Calu3 (cell line): ENCODE measurements at regions of chr1 and their contacts with region 1.

Region 1: DNA sequence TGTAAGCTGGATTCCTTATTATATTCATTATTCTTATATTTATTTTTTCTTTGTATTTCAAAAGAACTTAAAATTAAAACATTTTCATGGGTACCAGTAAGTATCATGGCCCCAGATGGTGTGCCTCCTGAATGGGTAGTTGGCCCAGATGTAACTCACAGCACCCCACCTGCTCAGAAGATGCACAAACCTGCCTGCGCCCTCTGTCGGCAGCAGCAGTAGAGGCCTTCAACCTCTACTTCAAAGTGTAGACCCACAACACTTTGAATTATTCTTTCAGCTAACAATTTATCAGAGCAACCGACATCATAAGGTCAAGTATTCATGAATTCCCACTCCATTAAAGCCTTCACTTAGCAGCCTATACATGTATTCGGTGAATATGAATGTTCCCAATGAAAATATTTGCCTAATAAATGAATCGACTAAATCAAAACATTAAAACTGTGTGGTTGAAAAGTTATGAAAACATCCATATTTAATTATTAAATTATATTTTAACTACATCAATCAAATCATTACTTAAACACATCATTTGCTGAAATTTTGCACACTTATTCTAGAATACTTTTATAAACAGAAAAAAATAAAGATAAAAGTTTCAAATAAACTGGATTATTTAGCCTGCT is 25.4 kb downstream of the PIGM start:
- DNase-seq: peak; percentile 85
- H3K4me3 Mint-ChIP-seq: no peak overlapping the region
- H3K27ac Mint-ChIP-seq: no peak overlapping the region
- H3K4me1 Mint-ChIP-seq: no peaks in the 10 kb centered on the region
- H3K27me3 Mint-ChIP-seq: peaks cover 42% of the 10 kb centered on the region
- CTCF ChIP-seq: peak; percentile 93

Region 2: GRCh38 chr1:159161001-159161718 is 845.3 kb before region 1 on chr1:
- CTCF ChIA-PET with region 1: no interaction called
- intact Hi-C with region 1: loop called (anchors 2 kb)
- DNase-seq: peak; percentile 86
- H3K4me3 Mint-ChIP-seq: no peak overlapping the region
- H3K27ac Mint-ChIP-seq: no peak overlapping the region
- H3K4me1 Mint-ChIP-seq: no peaks in the 10 kb centered on the region
- H3K27me3 Mint-ChIP-seq: peaks cover 53% of the 10 kb centered on the region
- CTCF ChIP-seq: peak; percentile 98

Region 3: GRCh38 chr1:159798893-159799292 is 207.5 kb before region 1 on chr1:
- CTCF ChIA-PET with region 1: interaction called, 31 read pairs
- intact Hi-C with region 1: loop called (anchors 1 kb)
- DNase-seq: peak; percentile 71
- H3K4me3 Mint-ChIP-seq: no peak overlapping the region
- H3K27ac Mint-ChIP-seq: no peak overlapping the region
- H3K4me1 Mint-ChIP-seq: no peaks in the 10 kb centered on the region
- H3K27me3 Mint-ChIP-seq: peaks cover 40% of the 10 kb centered on the region
- CTCF ChIP-seq: peak; percentile 64

Region 4: GRCh38 chr1:159936273-159936904 is 70.0 kb before region 1 on chr1:
- CTCF ChIA-PET with region 1: interaction called, 55 read pairs
- intact Hi-C with region 1: loop called (anchors 1 kb)
- DNase-seq: peak; percentile 93
- H3K4me3 Mint-ChIP-seq: no peak overlapping the region
- H3K27ac Mint-ChIP-seq: no peak overlapping the region
- H3K4me1 Mint-ChIP-seq: peaks cover 39% of the 10 kb centered on the region
- H3K27me3 Mint-ChIP-seq: no peaks in the 10 kb centered on the region
- CTCF ChIP-seq: peak; percentile 100

Region 5: GRCh38 chr1:159952932-159953331 is 53.5 kb before region 1 on chr1:
- CTCF ChIA-PET with region 1: no interaction called
- intact Hi-C with region 1: no loop called
- DNase-seq: no peak
- H3K4me3 Mint-ChIP-seq: no peak overlapping the region
- H3K27ac Mint-ChIP-seq: no peak overlapping the region
- H3K4me1 Mint-ChIP-seq: peaks cover 19% of the 10 kb centered on the region
- H3K27me3 Mint-ChIP-seq: peaks cover 64% of the 10 kb centered on the region
- CTCF ChIP-seq: no peak

Region 6: GRCh38 chr1:160018900-160019299 is 12.5 kb after region 1 on chr1:
- CTCF ChIA-PET with region 1: interaction called, 10 read pairs
- intact Hi-C with region 1: no loop called
- DNase-seq: no peak
- H3K4me3 Mint-ChIP-seq: no peak overlapping the region
- H3K27ac Mint-ChIP-seq: no peak overlapping the region
- H3K4me1 Mint-ChIP-seq: peaks cover 18% of the 10 kb centered on the region
- H3K27me3 Mint-ChIP-seq: peaks cover 27% of the 10 kb centered on the region
- CTCF ChIP-seq: no peak

Region 7: GRCh38 chr1:160489513-160490261 is 483.3 kb after region 1 on chr1:
- CTCF ChIA-PET with region 1: no interaction called
- intact Hi-C with region 1: no loop called
- DNase-seq: no peak
- H3K4me3 Mint-ChIP-seq: no peak overlapping the region
- H3K27ac Mint-ChIP-seq: no peak overlapping the region
- H3K4me1 Mint-ChIP-seq: no peaks in the 10 kb centered on the region
- H3K27me3 Mint-ChIP-seq: peaks cover 23% of the 10 kb centered on the region
- CTCF ChIP-seq: no peak